Activated CD8-positive, alpha-beta T cell treated with anti-CD3 and anti-CD28 coated beads, Interleukin-2, amount 10 ng/mL, durations not matched to agents 7 days and 5 days (primary cell): ENCODE measurements at regions of chr17 and their contacts with region 1.

Region 1: GRCh38 chr17:15257258-15257788 is 7.8 kb downstream of the PMP22 start:
- DNase-seq: peak; percentile 73
- ATAC-seq: peak; percentile 54
- H3K4me3 Mint-ChIP-seq: no peak overlapping the region
- H3K27ac Mint-ChIP-seq: no peak overlapping the region
- H3K4me1 Mint-ChIP-seq: peaks cover 30% of the 10 kb centered on the region
- H3K27me3 Mint-ChIP-seq: peaks cover 54% of the 10 kb centered on the region

Region 2: DNA sequence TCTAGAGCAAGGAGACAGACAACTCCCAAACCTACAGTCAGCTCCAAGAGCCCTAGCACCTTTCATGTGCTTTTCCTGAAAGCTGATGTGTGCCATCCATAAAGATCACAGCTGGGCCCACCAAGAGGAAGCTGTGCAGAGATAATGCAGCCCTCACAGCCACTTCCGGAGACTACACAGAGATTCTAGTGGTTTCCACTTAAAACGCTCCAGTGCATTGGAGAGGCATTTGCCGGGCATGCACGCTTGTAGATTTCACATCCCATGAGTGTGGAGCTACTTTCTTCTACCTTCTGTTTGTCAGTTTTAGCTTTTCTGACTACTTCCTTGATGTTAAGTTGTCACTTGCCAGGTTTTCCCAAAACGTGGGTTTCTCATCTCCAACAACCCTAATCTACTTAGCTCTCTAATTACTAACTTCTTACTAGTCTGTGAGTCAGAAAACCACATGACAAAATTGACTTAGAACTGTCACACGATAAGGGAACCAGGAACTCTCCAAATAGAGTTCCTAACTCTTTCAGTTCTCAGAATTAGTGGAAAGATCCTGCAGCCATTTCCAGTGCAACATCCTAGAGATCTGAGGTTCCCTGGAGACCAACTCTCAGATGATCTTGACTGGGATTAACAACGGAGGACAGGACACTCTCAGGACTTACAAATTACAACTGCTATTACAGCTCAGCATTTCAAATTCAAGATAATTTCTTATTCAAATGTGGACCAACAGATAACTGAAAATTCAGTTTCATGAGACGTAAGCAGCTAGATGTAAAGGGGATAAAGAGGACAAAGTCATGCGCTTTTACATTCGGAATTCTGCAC is 20.8 kb before region 1 on chr17:
- CTCF ChIA-PET with region 1: interaction called, 13 read pairs
- POLR2A ChIA-PET with region 1: no interaction called
- DNase-seq: no peak
- ATAC-seq: no peak
- H3K4me3 Mint-ChIP-seq: no peak overlapping the region
- H3K27ac Mint-ChIP-seq: no peak overlapping the region
- H3K4me1 Mint-ChIP-seq: peaks cover 10% of the 10 kb centered on the region
- H3K27me3 Mint-ChIP-seq: peaks cover 2% of the 10 kb centered on the region

Region 3: GRCh38 chr17:15298176-15298575 is 40.9 kb after region 1 on chr17:
- CTCF ChIA-PET with region 1: no interaction called
- POLR2A ChIA-PET with region 1: no interaction called
- DNase-seq: no peak
- ATAC-seq: no peak
- H3K4me3 Mint-ChIP-seq: no peak overlapping the region
- H3K27ac Mint-ChIP-seq: no peak overlapping the region
- H3K4me1 Mint-ChIP-seq: no peaks in the 10 kb centered on the region
- H3K27me3 Mint-ChIP-seq: no peaks in the 10 kb centered on the region

Region 4: GRCh38 chr17:15516150-15516549 is 258.8 kb after region 1 on chr17:
- CTCF ChIA-PET with region 1: interaction called, 12 read pairs
- POLR2A ChIA-PET with region 1: no interaction called
- DNase-seq: no peak
- ATAC-seq: no peak
- H3K4me3 Mint-ChIP-seq: no peak overlapping the region
- H3K27ac Mint-ChIP-seq: no peak overlapping the region
- H3K4me1 Mint-ChIP-seq: peaks cover 4% of the 10 kb centered on the region
- H3K27me3 Mint-ChIP-seq: no peaks in the 10 kb centered on the region